Activated CD4-positive, alpha-beta memory T cell treated with anti-CD3 and anti-CD28 coated beads for 36 hours (primary cell): ENCODE measurements at regions of chr1 and their contacts with region 1.

Region 1: DNA sequence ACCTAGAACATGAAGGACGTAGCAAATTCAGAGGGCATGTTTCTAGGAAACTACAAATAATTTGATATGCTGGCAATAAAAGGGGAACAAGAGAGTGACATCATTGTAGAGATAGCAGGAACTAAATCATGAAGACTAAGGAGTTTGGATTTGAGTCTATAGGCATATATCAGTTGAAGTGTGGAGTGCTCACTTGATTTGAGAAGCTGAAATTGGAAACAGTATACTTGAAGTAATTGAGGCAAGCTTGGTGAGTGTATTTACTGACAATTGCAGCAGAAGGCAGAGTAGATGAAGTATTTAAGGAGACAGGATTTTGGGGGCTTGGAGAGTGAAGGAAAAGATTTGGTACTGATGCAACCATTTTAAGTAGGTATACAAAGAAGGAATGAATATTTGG is 6.4 kb upstream of the TMCO2 start:
- DNase-seq: no peak
- H3K4me3 Mint-ChIP-seq: peak overlapping the region; percentile 14
- H3K27ac Mint-ChIP-seq: peak overlapping the region; percentile 84
- H3K4me1 Mint-ChIP-seq: peaks cover 66% of the 10 kb centered on the region
- H3K27me3 Mint-ChIP-seq: no peaks in the 10 kb centered on the region

Region 2: DNA sequence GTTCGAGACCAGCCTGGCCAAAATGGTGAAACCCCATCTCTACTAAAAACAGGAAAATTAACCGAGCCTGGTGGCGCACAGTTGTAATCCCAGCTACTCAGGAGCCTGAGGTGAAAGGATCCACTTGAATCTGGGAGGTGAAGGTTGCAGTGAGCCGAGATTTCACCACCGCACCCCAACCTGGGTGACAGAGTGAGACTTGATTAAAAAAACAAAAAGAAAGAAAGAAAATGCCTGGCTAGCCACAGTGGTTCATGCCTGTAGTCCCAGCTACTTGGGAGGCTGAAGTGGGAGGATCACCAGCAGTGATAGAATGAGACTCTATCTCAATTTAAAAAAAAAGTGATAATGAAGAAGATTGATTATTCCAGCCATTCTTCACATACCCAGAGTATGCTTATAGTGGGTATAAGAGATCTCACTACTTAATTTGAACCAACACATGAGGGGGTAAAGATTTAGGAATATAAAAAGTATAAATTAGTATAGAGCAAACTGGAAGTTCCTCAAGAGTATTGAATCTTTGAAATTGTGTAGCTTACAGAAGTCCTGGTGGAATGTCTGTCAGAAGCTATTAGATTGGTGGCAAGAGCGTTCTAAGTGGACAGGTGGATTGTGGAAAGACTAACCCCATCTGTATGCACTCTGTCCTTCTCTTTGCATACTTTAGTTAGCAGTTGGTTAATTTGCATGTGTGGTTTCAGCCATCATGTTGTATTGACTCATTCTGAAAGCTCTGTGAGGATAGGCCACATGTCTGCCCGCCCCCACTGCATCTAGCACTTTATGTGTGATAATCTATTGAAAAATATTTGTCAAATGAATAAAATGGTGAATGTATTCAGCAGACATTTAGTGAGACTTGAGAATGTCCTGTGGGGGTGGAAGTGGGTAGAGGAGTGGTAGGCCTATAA is 55.2 kb before region 1 on chr1:
- CTCF ChIA-PET with region 1: interaction called, 3 read pairs
- POLR2A ChIA-PET with region 1: interaction called, 8 read pairs
- intact Hi-C with region 1: loop called (anchors 2 kb)
- DNase-seq: peak; percentile 75
- H3K4me3 Mint-ChIP-seq: peak overlapping the region; percentile 46
- H3K27ac Mint-ChIP-seq: peak overlapping the region; percentile 56
- H3K4me1 Mint-ChIP-seq: peaks cover 45% of the 10 kb centered on the region
- H3K27me3 Mint-ChIP-seq: no peaks in the 10 kb centered on the region

Region 3: DNA sequence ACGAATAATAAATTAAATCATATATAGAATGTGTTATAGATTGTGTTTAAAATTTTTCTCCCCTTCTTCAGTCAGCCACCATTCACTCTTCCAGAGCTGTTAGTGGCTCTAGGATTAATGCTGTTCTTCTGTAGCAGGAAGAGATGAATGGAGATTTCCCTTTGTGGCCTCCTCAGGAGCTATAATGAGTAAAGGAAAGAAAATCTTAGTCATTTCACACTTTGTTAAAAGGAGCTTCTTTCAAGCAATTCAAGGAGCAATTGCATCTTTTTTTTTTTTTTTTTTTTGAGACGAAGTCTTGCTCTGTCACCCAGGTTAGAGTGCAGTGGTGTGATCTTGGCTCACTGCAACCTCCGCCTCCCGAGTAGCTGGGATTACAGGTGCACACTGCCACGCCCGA is 17.3 kb before region 1 on chr1:
- CTCF ChIA-PET with region 1: interaction called, 8 read pairs
- POLR2A ChIA-PET with region 1: interaction called, 16 read pairs
- intact Hi-C with region 1: no loop called
- DNase-seq: peak; percentile 41
- H3K4me3 Mint-ChIP-seq: no peak overlapping the region
- H3K27ac Mint-ChIP-seq: no peak overlapping the region
- H3K4me1 Mint-ChIP-seq: peaks cover 25% of the 10 kb centered on the region
- H3K27me3 Mint-ChIP-seq: no peaks in the 10 kb centered on the region

Region 4: GRCh38 chr1:40257688-40258444 is 16.5 kb after region 1 on chr1 and contains the start of gene ZMPSTE24:
- CTCF ChIA-PET with region 1: interaction called, 3 read pairs
- POLR2A ChIA-PET with region 1: interaction called, 8 read pairs
- intact Hi-C with region 1: loop called (anchors 1 kb)
- DNase-seq: peak; percentile 98
- H3K4me3 Mint-ChIP-seq: peak within 1 kb of the TSS; percentile 86
- H3K27ac Mint-ChIP-seq: peak within 1 kb of the TSS; percentile 97
- H3K4me1 Mint-ChIP-seq: peaks cover 54% of the 10 kb centered on the region
- H3K27me3 Mint-ChIP-seq: no peaks in the 10 kb centered on the region
- total RNA-seq, gene ZMPSTE24: 29.5 to 30.5 TPM

Region 5: GRCh38 chr1:40264354-40264781 is 23.0 kb after region 1 on chr1:
- CTCF ChIA-PET with region 1: no interaction called
- POLR2A ChIA-PET with region 1: interaction called, 6 read pairs
- intact Hi-C with region 1: loop called (anchors 1 kb)
- DNase-seq: peak; percentile 59
- H3K4me3 Mint-ChIP-seq: peak overlapping the region; percentile 16
- H3K27ac Mint-ChIP-seq: peak overlapping the region; percentile 91
- H3K4me1 Mint-ChIP-seq: peaks cover 63% of the 10 kb centered on the region
- H3K27me3 Mint-ChIP-seq: no peaks in the 10 kb centered on the region

Region 6: GRCh38 chr1:40270152-40270834 is 28.9 kb after region 1 on chr1:
- CTCF ChIA-PET with region 1: no interaction called
- POLR2A ChIA-PET with region 1: no interaction called
- intact Hi-C with region 1: loop called (anchors 1 kb)
- DNase-seq: peak; percentile 48
- H3K4me3 Mint-ChIP-seq: no peak overlapping the region
- H3K27ac Mint-ChIP-seq: peak overlapping the region; percentile 93
- H3K4me1 Mint-ChIP-seq: peaks cover 42% of the 10 kb centered on the region
- H3K27me3 Mint-ChIP-seq: no peaks in the 10 kb centered on the region